ENCODE measurements at regions of chr15 and their contacts with region 1.

Region 1: DNA sequence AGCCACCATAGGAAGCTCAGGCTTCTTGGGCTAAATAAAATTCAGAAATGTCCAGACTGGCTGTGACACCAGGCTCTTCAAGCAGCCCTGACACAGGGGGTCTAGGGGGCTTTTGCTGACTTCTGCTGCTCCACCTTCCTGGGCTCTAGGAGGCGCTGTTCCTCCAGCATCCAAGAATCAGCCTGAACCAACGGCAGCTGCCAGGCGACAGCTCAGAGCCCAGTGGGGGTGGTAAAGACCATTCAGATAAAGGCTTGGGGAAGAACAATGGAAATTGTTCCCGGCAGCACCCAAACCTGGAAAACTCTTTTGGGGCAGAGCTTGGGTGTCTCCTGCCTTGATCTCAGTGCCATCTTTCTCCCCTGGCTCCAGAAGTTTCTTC is 21.6 kb upstream of the PSTPIP1 start:
- DNase-seq: peak; percentile 81
- ATAC-seq: peak; percentile 71
- H3K4me3 Mint-ChIP-seq: no peak overlapping the region
- H3K27ac Mint-ChIP-seq: no peak overlapping the region
- H3K4me1 Mint-ChIP-seq: peaks cover 34% of the 10 kb centered on the region
- H3K27me3 Mint-ChIP-seq: no peaks in the 10 kb centered on the region

Region 2: GRCh38 chr15:76987926-76988860 is 14.8 kb after region 1 on chr15:
- CTCF ChIA-PET with region 1: interaction called, 28 read pairs
- DNase-seq: peak; percentile 93
- ATAC-seq: peak; percentile 90
- H3K4me3 Mint-ChIP-seq: peak overlapping the region; percentile 49
- H3K27ac Mint-ChIP-seq: peak overlapping the region; percentile 100
- H3K4me1 Mint-ChIP-seq: peaks cover 60% of the 10 kb centered on the region
- H3K27me3 Mint-ChIP-seq: no peaks in the 10 kb centered on the region

Region 3: DNA sequence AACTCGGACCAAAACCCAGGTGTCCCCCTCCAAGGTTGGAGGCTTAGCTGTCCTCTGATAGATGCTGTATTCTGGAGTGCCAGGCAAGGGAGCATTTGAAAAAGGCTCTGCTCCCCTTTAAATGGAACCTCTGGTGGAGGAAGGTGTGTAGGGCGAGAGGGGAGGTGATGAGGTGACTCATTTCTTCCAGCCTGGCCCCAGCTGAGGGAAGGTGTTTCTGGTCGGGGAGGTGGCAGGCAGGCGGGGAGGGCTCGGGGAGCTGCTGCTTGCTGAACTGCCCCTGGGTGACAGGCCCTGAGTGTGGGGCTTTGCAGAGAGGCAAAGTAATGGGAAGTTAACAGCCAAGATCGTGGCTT is 40.4 kb after region 1 on chr15:
- CTCF ChIA-PET with region 1: interaction called, 25 read pairs
- DNase-seq: peak; percentile 97
- ATAC-seq: peak; percentile 83
- H3K4me3 Mint-ChIP-seq: peak overlapping the region; percentile 70
- H3K27ac Mint-ChIP-seq: peak overlapping the region; percentile 99
- H3K4me1 Mint-ChIP-seq: peaks cover 98% of the 10 kb centered on the region
- H3K27me3 Mint-ChIP-seq: no peaks in the 10 kb centered on the region

Region 4: DNA sequence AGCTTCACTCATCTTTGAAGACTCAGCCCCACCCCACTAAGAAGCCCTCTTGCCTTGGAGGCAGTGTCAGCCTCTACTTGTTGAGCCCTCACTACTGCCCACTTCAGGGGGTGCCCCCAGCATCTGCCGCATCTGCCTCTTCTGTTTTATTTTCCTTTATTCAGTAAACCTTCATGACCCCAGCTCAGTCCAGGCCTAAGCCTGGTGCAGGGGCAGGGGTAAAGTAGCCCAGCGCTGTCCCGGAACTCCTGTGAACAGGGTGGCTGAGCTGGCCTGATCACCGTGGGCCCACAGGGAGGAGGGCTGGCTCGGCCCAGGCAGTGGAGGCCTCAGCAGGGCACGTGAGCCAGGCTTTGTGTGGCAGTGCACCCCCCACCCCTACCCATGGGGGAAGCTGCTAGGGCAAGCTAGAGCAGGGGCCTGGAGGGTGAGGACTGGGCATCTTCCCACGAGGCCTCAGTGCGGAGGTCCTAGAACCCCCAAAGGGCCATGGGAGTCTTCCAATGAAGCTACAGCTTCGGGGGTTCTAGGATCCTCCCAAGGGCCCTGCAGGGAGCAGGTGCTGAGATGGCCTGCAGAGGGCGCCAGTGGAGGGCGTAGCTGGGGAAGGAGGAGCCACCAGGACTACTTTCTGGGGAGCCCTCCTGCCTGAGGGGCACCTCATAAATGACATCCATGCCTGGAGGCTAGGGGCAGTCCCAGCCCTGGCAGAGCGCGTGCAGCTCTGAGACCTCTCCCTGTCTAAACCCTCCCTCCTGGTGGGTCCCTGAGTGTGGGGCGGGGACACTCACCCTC is 61.5 kb after region 1 on chr15:
- CTCF ChIA-PET with region 1: interaction called, 31 read pairs
- DNase-seq: peak; percentile 42
- ATAC-seq: no peak
- H3K4me3 Mint-ChIP-seq: no peak overlapping the region
- H3K27ac Mint-ChIP-seq: no peak overlapping the region
- H3K4me1 Mint-ChIP-seq: peaks cover 13% of the 10 kb centered on the region
- H3K27me3 Mint-ChIP-seq: no peaks in the 10 kb centered on the region

Region 5: GRCh38 chr15:77107531-77108355 is 134.4 kb after region 1 on chr15:
- CTCF ChIA-PET with region 1: interaction called, 21 read pairs
- DNase-seq: peak; percentile 66
- ATAC-seq: peak; percentile 69
- H3K4me3 Mint-ChIP-seq: no peak overlapping the region
- H3K27ac Mint-ChIP-seq: no peak overlapping the region
- H3K4me1 Mint-ChIP-seq: no peaks in the 10 kb centered on the region
- H3K27me3 Mint-ChIP-seq: no peaks in the 10 kb centered on the region

Region 6: GRCh38 chr15:77179541-77179998 is 206.2 kb after region 1 on chr15:
- CTCF ChIA-PET with region 1: interaction called, 12 read pairs
- DNase-seq: peak; percentile 66
- ATAC-seq: peak; percentile 82
- H3K4me3 Mint-ChIP-seq: peak overlapping the region; percentile 27
- H3K27ac Mint-ChIP-seq: peak overlapping the region; percentile 92
- H3K4me1 Mint-ChIP-seq: peaks cover 43% of the 10 kb centered on the region
- H3K27me3 Mint-ChIP-seq: no peaks in the 10 kb centered on the region